Naive thymus-derived CD4-positive, alpha-beta T cell (primary cell): ENCODE measurements at regions of chr2 and their contacts with region 1.

Region 1: DNA sequence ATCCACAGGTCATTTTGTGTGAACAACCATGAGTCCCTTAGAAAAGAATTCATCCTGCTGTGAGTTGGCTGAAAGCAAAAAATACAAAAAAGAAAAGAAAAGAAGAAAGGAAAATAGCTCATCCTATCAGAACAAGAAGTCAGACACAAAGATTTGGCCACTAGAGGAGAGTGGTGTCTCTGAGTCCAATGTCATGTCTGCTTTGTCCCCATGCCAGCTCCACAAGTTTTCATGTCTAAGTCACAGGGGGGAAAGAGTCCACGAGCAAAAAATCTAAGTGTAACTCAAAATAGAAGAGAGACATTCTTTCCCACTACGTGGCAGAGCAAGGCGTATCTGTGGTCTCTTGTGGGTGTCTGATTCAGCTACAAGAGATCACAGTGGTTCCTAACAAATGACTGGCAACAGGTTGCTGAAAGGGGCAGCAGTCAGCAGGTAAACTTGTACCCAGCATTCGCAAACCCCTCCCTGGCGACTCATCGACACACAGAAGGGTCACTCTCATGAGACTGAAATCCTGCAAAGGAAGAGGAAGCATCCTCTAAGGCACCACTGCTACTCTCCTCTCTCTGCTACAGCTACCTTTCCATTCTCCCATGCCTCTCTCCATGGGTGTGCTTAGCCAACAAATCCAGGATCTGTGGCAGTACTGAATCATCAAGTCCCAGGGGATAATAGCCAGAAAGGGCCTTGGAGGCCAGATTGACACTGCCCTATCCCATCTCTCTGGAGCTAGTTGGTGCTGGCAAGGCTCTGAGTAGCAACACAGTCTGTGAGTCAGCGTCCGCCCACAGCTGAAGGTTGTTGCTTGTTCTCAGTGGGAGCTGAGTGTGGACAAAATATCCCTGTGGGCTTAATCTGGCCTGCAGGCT is 123.0 kb upstream of the SLC39A10 start:
- DNase-seq: peak in 8 of 9 donors; percentile 28 to 63 (median 42)
- ATAC-seq: peak; percentile 48
- H3K4me3 ChIP-seq: peak overlapping the region; percentile 51
- H3K4me3 Mint-ChIP-seq: peak overlapping the region; percentile 77 to 95 (median 90)
- H3K27ac ChIP-seq: peak overlapping the region; percentile 77
- H3K27ac Mint-ChIP-seq: peak overlapping the region; percentile 92 to 100 (median 98)
- H3K4me1 ChIP-seq: peaks cover 70 to 73% of the 10 kb centered on the region in 2 donors
- H3K4me1 Mint-ChIP-seq: peaks cover 69 to 90% (median 86%) of the 10 kb centered on the region in 7 donors
- H3K27me3 ChIP-seq: no peaks in the 10 kb centered on the region
- H3K27me3 Mint-ChIP-seq: no peaks in the 10 kb centered on the region

Region 2: DNA sequence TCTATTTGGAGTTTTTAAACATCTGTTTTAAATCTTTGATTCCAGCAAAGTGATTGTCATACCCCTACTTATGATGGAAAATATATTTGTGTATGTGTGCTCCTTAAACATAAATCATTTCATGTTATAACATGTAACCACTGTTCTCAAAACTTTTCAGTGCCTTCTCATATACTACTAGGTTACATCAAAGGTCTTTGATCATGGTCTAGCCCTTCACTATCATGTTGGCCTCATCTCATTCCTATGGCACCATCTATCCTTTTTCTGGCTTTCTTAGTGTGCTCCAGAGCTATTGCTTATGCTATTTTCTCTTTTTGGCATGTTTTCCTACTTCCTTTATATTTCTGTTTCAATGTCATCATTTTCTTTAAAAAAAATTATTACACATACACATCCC is 244.9 kb before region 1 on chr2:
- CTCF ChIA-PET with region 1: no interaction called
- POLR2A ChIA-PET with region 1: no interaction called
- intact Hi-C with region 1: no loop called
- DNase-seq: no peak
- ATAC-seq: no peak
- H3K4me3 ChIP-seq: no peak overlapping the region
- H3K4me3 Mint-ChIP-seq: no peak overlapping the region
- H3K27ac ChIP-seq: no peak overlapping the region
- H3K27ac Mint-ChIP-seq: no peak overlapping the region
- H3K4me1 ChIP-seq: no peaks in the 10 kb centered on the region
- H3K4me1 Mint-ChIP-seq: peaks cover 0 to 4% (median 0%) of the 10 kb centered on the region in 7 donors
- H3K27me3 ChIP-seq: no peaks in the 10 kb centered on the region
- H3K27me3 Mint-ChIP-seq: peaks cover 0 to 7% (median 0%) of the 10 kb centered on the region in 5 donors

Region 3: GRCh38 chr2:195473862-195474261 is 60.1 kb before region 1 on chr2:
- CTCF ChIA-PET with region 1: no interaction called
- POLR2A ChIA-PET with region 1: no interaction called
- intact Hi-C with region 1: no loop called
- DNase-seq: no peak
- ATAC-seq: peak; percentile 20
- H3K4me3 ChIP-seq: no peak overlapping the region
- H3K4me3 Mint-ChIP-seq: no peak overlapping the region
- H3K27ac ChIP-seq: no peak overlapping the region
- H3K27ac Mint-ChIP-seq: peak overlapping the region in 2 of 9 donors; percentile 6 to 76
- H3K4me1 ChIP-seq: peaks cover 6 to 8% of the 10 kb centered on the region in 2 donors
- H3K4me1 Mint-ChIP-seq: peaks cover 2 to 28% (median 23%) of the 10 kb centered on the region in 7 donors
- H3K27me3 ChIP-seq: no peaks in the 10 kb centered on the region
- H3K27me3 Mint-ChIP-seq: no peaks in the 10 kb centered on the region

Region 4: DNA sequence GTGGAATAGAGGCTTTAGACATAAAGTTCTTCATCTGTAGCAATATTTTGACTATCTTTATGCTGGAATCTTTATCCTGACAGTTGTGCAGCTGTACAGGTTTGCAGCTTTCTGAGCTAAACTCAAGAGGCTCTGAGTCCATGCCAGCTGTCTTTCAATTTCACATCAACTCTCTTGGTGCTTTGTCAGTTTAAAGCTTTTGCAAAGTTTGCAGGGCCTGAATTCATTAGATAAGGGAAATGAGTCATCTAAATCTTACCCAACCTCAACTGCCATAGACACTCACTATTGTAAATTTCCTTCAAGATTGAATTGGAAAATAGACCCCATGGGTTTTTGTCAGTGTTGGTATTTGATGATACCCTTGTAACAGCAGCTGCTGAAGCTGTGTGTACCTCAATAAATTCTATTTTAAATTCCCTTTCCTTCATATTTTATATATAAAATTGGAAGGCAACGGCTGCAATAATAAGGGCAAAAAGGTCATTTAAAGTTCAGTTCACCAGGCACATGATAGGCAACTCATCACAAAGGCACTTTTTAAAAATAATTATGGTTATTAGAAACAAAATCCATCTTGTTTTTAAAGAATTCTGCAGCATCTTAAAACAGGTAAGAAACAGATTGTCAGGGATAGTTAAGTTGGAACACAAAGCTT is 46.9 kb before region 1 on chr2:
- CTCF ChIA-PET with region 1: no interaction called
- POLR2A ChIA-PET with region 1: interaction called, 3 read pairs
- intact Hi-C with region 1: loop called in 1 of 2 experiments (anchors 1 kb)
- DNase-seq: no peak
- ATAC-seq: peak; percentile 41
- H3K4me3 ChIP-seq: no peak overlapping the region
- H3K4me3 Mint-ChIP-seq: peak overlapping the region in 5 of 10 donors; percentile 3 to 74 (median 28)
- H3K27ac ChIP-seq: no peak overlapping the region
- H3K27ac Mint-ChIP-seq: peak overlapping the region in 2 of 9 donors; percentile 21 to 79
- H3K4me1 ChIP-seq: peaks cover 0 to 6% of the 10 kb centered on the region in 2 donors
- H3K4me1 Mint-ChIP-seq: peaks cover 0 to 43% (median 21%) of the 10 kb centered on the region in 7 donors
- H3K27me3 ChIP-seq: no peaks in the 10 kb centered on the region
- H3K27me3 Mint-ChIP-seq: no peaks in the 10 kb centered on the region

Region 5: GRCh38 chr2:195543902-195544894 is 10.2 kb after region 1 on chr2:
- CTCF ChIA-PET with region 1: interaction called, 7 read pairs
- POLR2A ChIA-PET with region 1: interaction called, 38 read pairs
- intact Hi-C with region 1: loop called in 1 of 2 experiments (anchors 1 kb)
- DNase-seq: no peak
- ATAC-seq: peak; percentile 41
- H3K4me3 ChIP-seq: no peak overlapping the region
- H3K4me3 Mint-ChIP-seq: peak overlapping the region in 9 of 10 donors; percentile 0 to 70 (median 54)
- H3K27ac ChIP-seq: peak overlapping the region; percentile 52
- H3K27ac Mint-ChIP-seq: peak overlapping the region; percentile 24 to 100 (median 85)
- H3K4me1 ChIP-seq: peaks cover 20 to 27% of the 10 kb centered on the region in 2 donors
- H3K4me1 Mint-ChIP-seq: peaks cover 29 to 80% (median 61%) of the 10 kb centered on the region in 7 donors
- H3K27me3 ChIP-seq: no peaks in the 10 kb centered on the region
- H3K27me3 Mint-ChIP-seq: no peaks in the 10 kb centered on the region